Mammary epithelial cell (primary cell): ENCODE measurements at regions of chr11 and their contacts with region 1.

Region 1: DNA sequence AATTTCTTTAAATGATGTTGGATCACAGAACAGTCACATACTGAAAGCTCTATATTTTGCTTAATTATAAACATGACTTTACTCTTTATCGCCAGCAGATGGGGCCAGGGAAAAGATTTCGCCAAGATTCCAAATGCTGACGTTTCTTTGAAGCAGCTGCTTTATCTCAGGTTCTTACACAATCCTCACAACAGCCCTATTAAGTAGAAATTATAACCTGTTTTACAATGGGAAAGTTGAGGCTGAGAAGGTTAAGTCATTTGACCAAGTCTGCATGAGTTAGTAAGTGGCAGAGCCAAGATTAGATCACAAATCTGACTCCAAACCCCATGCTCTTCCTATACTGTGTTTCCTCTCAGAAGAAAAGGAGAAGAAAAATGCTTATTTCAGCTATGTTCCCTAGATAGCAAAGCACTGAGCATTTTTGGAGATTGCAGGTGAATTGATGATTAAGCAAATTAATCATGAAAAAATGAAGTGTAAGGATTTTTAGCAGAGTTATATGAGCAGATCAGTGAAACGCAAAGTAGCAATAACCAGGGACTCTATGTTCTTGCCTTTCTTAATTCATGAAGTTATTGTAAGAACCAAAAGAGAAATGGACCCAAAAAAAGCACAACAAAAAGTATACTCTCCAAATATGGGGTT is 79.0 kb downstream of the AASDHPPT start:
- DNase-seq: peak; percentile 58
- H3K4me3 ChIP-seq: no peak overlapping the region
- H3K27ac ChIP-seq: no peak overlapping the region
- H3K4me1 ChIP-seq: peaks cover 23% of the 10 kb centered on the region
- H3K27me3 ChIP-seq: no peaks in the 10 kb centered on the region
- CTCF ChIP-seq: peak; percentile 40 to 63

Region 2: DNA sequence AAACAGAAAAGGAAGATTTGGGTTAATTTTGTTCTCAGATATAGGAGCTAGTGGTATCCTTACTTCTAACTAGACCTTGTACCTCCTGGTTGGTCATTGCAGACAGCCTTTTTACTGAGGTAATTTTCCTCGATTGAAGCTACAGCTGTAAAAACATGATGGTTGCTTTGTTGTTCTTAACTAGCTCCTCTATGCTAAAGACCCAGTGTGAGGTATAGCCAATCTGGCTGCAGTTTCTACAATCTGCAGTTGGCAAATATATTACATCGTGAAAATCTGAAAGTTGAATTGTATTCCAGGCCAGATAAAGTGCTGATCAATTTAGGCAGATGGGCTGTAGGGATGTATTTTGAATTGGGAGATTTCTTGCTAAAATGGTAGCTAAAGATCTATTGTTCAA is 37.6 kb after region 1 on chr11:
- CTCF ChIA-PET with region 1: interaction called, 4 read pairs
- dilution Hi-C with region 1: no loop called
- in situ Hi-C with region 1: no loop called
- intact Hi-C with region 1: loop called (anchors 5 kb)
- DNase-seq: no peak
- H3K4me3 ChIP-seq: no peak overlapping the region
- H3K27ac ChIP-seq: no peak overlapping the region
- H3K4me1 ChIP-seq: no peaks in the 10 kb centered on the region
- H3K27me3 ChIP-seq: no peaks in the 10 kb centered on the region
- CTCF ChIP-seq: no peak

Region 3: GRCh38 chr11:106242718-106243415 is 86.5 kb after region 1 on chr11:
- CTCF ChIA-PET with region 1: no interaction called
- dilution Hi-C with region 1: no loop called
- in situ Hi-C with region 1: no loop called
- intact Hi-C with region 1: no loop called
- DNase-seq: no peak
- H3K4me3 ChIP-seq: no peak overlapping the region
- H3K27ac ChIP-seq: no peak overlapping the region
- H3K4me1 ChIP-seq: no peaks in the 10 kb centered on the region
- H3K27me3 ChIP-seq: no peaks in the 10 kb centered on the region
- CTCF ChIP-seq: no peak

Region 4: GRCh38 chr11:106322111-106322510 is 165.7 kb after region 1 on chr11:
- CTCF ChIA-PET with region 1: no interaction called
- dilution Hi-C with region 1: no loop called
- in situ Hi-C with region 1: no loop called
- intact Hi-C with region 1: loop called (anchors 1 kb)
- DNase-seq: no peak
- H3K4me3 ChIP-seq: no peak overlapping the region
- H3K27ac ChIP-seq: no peak overlapping the region
- H3K4me1 ChIP-seq: no peaks in the 10 kb centered on the region
- H3K27me3 ChIP-seq: no peaks in the 10 kb centered on the region
- CTCF ChIP-seq: no peak

Region 5: GRCh38 chr11:106585061-106585460 is 428.6 kb after region 1 on chr11:
- CTCF ChIA-PET with region 1: no interaction called
- dilution Hi-C with region 1: no loop called
- in situ Hi-C with region 1: no loop called
- intact Hi-C with region 1: loop called (anchors 1 kb)
- DNase-seq: peak; percentile 20
- H3K4me3 ChIP-seq: no peak overlapping the region
- H3K27ac ChIP-seq: no peak overlapping the region
- H3K4me1 ChIP-seq: no peaks in the 10 kb centered on the region
- H3K27me3 ChIP-seq: no peaks in the 10 kb centered on the region
- CTCF ChIP-seq: peak; percentile 46 to 68